ENCODE measurements at regions of chr15 and their contacts with region 1.

Region 1: DNA sequence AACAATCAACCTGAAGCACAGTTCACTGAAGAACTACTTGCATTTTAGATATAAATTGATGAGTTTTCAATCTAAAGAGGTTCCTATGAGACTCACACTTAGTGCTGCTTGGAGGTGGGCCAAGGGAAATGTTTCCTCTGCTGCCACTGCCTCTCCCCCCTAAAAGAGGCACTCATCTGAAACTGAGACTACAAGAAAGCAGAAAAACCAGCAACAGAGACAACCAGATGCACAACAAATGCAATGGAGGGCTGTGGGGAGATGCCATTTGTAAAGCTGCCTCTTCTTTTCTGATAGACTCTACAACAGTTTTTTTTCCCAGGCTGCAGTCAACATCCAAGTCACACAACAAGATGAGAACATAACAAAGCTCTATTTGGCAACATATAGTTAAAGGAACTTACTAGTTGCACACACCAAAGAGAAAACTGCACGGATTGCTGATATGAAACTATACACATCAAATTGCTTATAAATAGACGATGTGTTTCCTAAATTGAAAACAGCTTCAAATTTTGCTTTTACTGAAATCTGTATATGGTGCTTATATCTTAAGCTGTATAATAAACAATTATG is 11.0 kb downstream of the TSPAN3 start:
- DNase-seq: peak in 1 of 3 donors; percentile 30
- H3K4me3 ChIP-seq: no peak overlapping the region
- H3K4me3 Mint-ChIP-seq: no peak overlapping the region
- H3K27ac ChIP-seq: no peak overlapping the region
- H3K27ac Mint-ChIP-seq: peak overlapping the region in 3 of 7 donors; percentile 61 to 78 (median 68)
- H3K4me1 ChIP-seq: peaks cover 4 to 26% of the 10 kb centered on the region in 2 donors
- H3K4me1 Mint-ChIP-seq: peaks cover 33% of the 10 kb centered on the region
- H3K27me3 ChIP-seq: no peaks in the 10 kb centered on the region
- H3K27me3 Mint-ChIP-seq: no peaks in the 10 kb centered on the region
- CTCF ChIP-seq: no peak

Region 2: GRCh38 chr15:76987926-76988860 is 71.7 kb before region 1 on chr15:
- intact Hi-C with region 1: loop called (anchors 10 kb)
- DNase-seq: peak; percentile 55 to 70 (median 68)
- H3K4me3 ChIP-seq: peak overlapping the region in 1 of 3 experiments; percentile 60
- H3K4me3 Mint-ChIP-seq: peak overlapping the region; percentile 69 to 78
- H3K27ac ChIP-seq: peak overlapping the region; percentile 71 to 85
- H3K27ac Mint-ChIP-seq: peak overlapping the region; percentile 88 to 96 (median 95)
- H3K4me1 ChIP-seq: peaks cover 100% of the 10 kb centered on the region in 2 donors
- H3K4me1 Mint-ChIP-seq: peaks cover 94% of the 10 kb centered on the region
- H3K27me3 ChIP-seq: no peaks in the 10 kb centered on the region
- H3K27me3 Mint-ChIP-seq: peaks cover 0 to 7% (median 0%) of the 10 kb centered on the region in 3 donors
- CTCF ChIP-seq: no peak

Region 3: GRCh38 chr15:76994971-76995945 is 64.6 kb before region 1 on chr15 and contains the start of gene PSTPIP1:
- intact Hi-C with region 1: loop called in 1 of 2 experiments (anchors 10 kb)
- DNase-seq: peak; percentile 45 to 48 (median 46)
- H3K4me3 ChIP-seq: peak within 1 kb of the TSS; percentile 53 to 94 (median 62)
- H3K4me3 Mint-ChIP-seq: peak within 1 kb of the TSS; percentile 90 to 96
- H3K27ac ChIP-seq: peak within 1 kb of the TSS; percentile 55 to 91
- H3K27ac Mint-ChIP-seq: peak within 1 kb of the TSS; percentile 88 to 99 (median 95)
- H3K4me1 ChIP-seq: peaks cover 96 to 99% of the 10 kb centered on the region in 2 donors
- H3K4me1 Mint-ChIP-seq: peaks cover 95% of the 10 kb centered on the region
- H3K27me3 ChIP-seq: no peaks in the 10 kb centered on the region
- H3K27me3 Mint-ChIP-seq: peaks cover 0 to 5% (median 0%) of the 10 kb centered on the region in 3 donors
- CTCF ChIP-seq: no peak
- polyA plus RNA-seq, gene PSTPIP1: 85.9 to 183 (median 86.8) TPM

Region 4: DNA sequence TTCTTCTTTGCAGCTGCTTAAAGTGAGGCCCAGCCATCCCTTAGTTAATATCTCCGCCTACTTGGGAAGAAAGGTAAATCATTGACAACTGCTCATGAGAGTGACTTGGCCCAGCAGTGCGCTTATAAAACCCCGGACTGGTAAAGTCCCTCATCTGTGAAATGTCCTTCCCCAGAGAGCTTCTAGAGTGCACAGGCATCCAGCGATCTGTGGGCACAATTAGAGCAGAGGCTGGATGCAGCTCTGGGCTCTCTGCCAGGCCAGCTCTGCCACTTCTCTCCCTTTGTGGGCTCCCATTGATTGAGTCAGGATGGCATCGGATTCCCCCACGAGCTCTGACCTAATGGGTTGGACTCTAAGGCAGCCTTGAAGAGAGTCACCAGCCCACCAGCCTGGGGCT is 791.8 kb after region 1 on chr15:
- intact Hi-C with region 1: no loop called
- DNase-seq: no peak
- H3K4me3 ChIP-seq: no peak overlapping the region
- H3K4me3 Mint-ChIP-seq: no peak overlapping the region
- H3K27ac ChIP-seq: no peak overlapping the region
- H3K27ac Mint-ChIP-seq: no peak overlapping the region
- H3K4me1 ChIP-seq: no peaks in the 10 kb centered on the region
- H3K4me1 Mint-ChIP-seq: no peaks in the 10 kb centered on the region
- H3K27me3 ChIP-seq: peaks cover 0 to 6% of the 10 kb centered on the region in 2 donors
- H3K27me3 Mint-ChIP-seq: peaks cover 8 to 36% (median 17%) of the 10 kb centered on the region in 3 donors
- CTCF ChIP-seq: no peak

Measured in CD14-positive monocyte (primary cell).